ENCODE measurements at regions of chr1 and their contacts with region 1.

Region 1: GRCh38 chr1:212665241-212666115 is 34.2 kb downstream of the BATF3 start:
- DNase-seq: peak; percentile 64
- H3K27ac ChIP-seq: no peak overlapping the region; the same call in 1 of the 2 replicates
- CTCF ChIP-seq: peak; percentile 88

Region 2: DNA sequence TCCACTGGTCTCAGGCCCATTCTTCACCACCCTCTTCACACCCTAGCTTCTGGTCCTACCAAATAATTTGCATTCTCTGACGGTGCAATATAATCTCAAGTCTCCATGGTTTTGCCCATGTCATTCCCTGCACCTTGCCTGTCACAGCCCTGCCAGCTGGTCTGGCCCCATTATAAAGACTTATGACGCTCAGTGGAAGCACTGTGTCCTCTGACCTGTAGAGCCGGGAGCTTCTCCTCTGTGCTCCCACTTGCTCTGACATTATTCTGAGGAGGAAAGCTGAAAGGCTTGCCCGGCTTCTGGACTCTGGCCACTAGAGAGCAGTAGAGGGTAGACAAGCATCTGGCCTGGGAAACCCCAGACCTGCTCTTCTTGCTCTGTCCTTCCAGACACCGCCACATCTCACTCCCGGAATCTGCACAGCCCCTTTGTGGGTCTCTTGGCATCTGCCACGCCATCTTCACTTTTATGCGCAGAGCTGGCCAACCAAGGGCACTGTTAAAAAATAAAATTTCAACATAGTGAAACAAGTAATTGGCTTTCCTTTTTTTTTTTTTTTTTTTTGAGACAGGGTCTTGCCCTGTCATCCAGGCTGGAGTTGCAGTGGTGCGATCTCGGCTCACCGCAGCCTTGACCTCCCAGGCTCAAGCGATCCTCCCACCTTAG is 188.3 kb before region 1 on chr1:
- CTCF ChIA-PET with region 1: interaction called, 11 read pairs
- POLR2A ChIA-PET with region 1: no interaction called
- DNase-seq: peak; percentile 79
- H3K27ac ChIP-seq: no peak overlapping the region
- CTCF ChIP-seq: peak; percentile 92

Region 3: GRCh38 chr1:212641956-212642355 is 23.5 kb before region 1 on chr1:
- CTCF ChIA-PET with region 1: interaction called, 10 read pairs
- POLR2A ChIA-PET with region 1: no interaction called
- DNase-seq: no peak
- H3K27ac ChIP-seq: no peak overlapping the region
- CTCF ChIP-seq: no peak

Region 4: DNA sequence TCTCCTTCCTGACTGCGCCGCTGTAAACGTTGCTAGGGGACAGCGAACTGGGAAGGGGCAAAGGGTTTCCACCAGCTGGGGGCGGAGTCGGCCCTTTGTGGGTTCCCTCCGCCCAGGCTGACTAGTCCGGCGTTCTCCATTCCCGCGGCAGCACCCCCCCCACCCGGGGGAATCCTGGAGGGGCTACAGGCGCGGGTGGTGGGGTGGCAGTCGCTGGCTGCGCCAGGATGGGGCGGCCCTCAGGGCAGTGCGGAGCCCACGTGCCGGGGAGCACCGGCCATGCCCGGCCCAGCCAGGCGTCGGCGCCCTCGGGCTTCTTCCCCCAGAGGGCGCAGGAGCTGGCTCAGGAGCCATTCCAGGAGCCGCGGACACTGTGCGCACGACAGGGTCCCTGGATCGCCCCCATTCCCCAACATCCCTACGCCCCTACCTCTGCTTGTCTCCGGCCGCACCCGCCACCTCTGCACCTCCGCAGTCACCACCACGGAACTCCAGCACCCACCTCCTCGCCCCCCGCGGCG is 33.7 kb after region 1 on chr1:
- CTCF ChIA-PET with region 1: interaction called, 10 read pairs
- POLR2A ChIA-PET with region 1: no interaction called
- DNase-seq: peak; percentile 31
- H3K27ac ChIP-seq: no peak overlapping the region
- CTCF ChIP-seq: peak; percentile 49

Region 5: DNA sequence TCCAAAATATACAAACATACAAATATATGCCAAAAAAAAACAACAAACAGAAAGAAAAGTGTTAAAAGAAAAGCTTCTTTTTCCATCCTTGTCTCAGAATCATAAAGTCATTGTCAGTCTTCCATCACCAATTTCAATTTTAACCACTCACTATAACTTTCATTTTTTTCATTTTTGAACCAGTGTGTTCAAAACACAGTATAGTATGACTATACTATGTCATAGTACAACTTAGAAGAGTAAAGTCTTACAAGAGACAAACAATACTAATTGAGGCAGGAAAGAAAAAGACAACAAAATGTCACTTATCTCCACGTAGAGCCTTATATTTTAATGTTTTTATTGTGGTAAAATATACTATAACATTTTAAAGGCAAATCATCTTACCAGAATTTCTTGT is 118.5 kb after region 1 on chr1:
- CTCF ChIA-PET with region 1: interaction called, 18 read pairs
- POLR2A ChIA-PET with region 1: no interaction called
- DNase-seq: no peak
- H3K27ac ChIP-seq: no peak overlapping the region
- CTCF ChIP-seq: no peak

Measured in RWPE1 (cell line).